Activated CD4-positive, alpha-beta T cell treated with anti-CD3 and anti-CD28 coated beads, Interleukin-2, amount 10 ng/mL, durations not matched to agents 24 days and 14 days (primary cell): ENCODE measurements at regions of chr6 and their contacts with region 1.

Region 1: DNA sequence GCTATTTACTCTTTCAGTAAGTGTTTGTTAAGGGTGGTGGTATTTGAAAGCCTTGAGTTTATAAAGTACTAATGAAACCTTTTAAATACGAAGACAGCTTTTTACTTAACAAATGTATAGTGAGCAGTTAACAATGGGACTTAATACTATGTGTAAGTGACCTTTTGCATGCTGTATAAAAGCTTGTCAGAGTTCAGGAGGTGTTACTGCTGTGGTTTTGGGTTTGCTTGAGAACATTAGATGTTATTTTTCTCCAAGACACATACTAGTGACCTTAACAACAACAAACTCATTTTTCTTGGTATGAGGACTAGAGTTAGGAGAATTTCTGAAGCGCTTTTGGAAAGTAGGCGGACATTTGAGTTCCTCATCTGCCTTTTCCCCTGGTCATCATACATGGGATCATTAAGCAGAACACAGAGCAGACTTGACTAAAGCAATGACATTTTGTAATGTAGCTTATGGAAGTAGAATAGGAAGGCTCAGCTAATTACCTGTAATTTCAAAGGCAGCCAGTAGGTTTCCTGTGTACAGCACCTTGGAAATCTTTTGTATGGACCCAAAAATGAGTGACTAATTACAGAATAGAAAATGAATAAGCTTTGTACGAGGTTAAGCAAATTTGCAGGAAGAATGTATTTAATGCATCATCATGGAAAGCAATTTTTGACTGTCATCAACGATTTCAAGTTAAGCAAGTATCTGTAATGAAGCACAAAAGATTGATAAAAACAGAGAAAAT is 14.1 kb downstream of the CDYL start:
- DNase-seq: peak; percentile 42
- H3K4me3 Mint-ChIP-seq: no peak overlapping the region
- H3K27ac Mint-ChIP-seq: no peak overlapping the region
- H3K4me1 Mint-ChIP-seq: peaks cover 18% of the 10 kb centered on the region
- H3K27me3 Mint-ChIP-seq: no peaks in the 10 kb centered on the region

Region 2: GRCh38 chr6:4774296-4774695 is 16.0 kb before region 1 on chr6:
- intact Hi-C with region 1: no loop called
- DNase-seq: no peak
- H3K4me3 Mint-ChIP-seq: peak overlapping the region; percentile 83
- H3K27ac Mint-ChIP-seq: peak overlapping the region; percentile 87
- H3K4me1 Mint-ChIP-seq: peaks cover 32% of the 10 kb centered on the region
- H3K27me3 Mint-ChIP-seq: peaks cover 35% of the 10 kb centered on the region

Region 3: DNA sequence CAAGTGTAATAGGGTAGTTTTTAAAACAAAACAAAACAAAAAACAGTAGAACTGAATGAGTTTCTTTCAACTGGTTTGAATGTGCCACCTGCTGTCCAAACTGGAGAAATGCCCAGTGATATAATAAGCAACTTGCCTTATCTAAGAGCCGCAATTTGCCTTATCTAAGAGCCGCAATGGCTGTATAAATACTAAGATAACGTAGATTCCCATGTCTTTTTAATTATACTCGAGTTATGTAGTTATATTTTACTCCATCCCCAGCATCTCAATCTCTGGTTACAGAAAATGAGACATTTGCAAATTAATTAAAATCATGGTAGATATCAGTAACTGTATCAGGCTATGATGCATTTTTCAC is 146.3 kb after region 1 on chr6:
- intact Hi-C with region 1: loop called (anchors 5 kb)
- DNase-seq: no peak
- H3K4me3 Mint-ChIP-seq: no peak overlapping the region
- H3K27ac Mint-ChIP-seq: no peak overlapping the region
- H3K4me1 Mint-ChIP-seq: peaks cover 32% of the 10 kb centered on the region
- H3K27me3 Mint-ChIP-seq: no peaks in the 10 kb centered on the region